ENCODE measurements at regions of chr11 and their contacts with region 1.

Region 1: DNA sequence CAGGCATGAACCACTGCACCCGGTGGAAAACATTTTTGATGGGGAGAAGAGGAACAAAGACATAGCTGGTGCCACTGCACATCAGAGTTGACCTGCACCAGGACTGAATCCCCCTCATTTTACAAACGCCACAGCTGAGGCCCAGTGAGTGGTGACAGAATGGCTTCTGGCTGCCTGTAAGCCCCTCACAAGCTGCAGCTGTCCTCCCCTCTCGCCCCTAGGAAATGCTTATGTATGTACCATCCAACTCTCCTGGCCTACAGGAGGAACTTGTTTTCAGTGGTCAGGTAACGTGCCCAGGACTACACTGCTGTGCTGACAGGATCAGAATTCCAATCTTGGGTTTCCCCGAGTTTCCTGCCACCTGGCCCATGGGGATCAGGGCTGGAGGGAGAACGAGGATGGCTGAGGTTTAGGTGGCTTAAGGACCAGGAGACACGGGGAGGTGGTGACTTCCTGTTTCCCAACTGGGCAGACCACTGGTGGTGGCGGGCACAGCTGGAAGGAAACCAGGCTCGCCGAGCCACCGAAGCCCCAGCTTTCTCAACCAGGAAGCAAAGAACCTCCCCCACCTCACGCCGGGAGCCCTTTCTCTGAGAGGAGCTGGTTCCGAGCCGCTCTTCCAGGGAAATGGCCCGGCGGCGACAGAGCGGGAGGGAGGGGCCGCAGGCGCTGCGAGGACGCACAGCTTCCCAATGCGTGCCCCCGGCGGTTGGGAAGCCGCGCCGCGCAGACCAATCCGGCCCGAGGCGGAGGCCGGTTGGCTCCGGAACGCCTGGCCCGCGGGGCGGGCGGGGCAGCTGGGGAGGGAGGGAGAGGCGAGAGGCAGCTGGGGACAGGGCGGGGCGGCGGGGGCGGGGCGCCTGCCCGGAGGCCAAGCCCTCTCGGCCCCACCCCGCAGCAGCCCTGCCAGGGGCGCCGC is 1.0 kb upstream of the LRFN4 start:
- DNase-seq: peak; percentile 90
- H3K4me3 ChIP-seq: peak overlapping the region; percentile 89
- H3K27ac ChIP-seq: peak overlapping the region; percentile 72
- H3K4me1 ChIP-seq: peaks cover 50% of the 10 kb centered on the region
- CTCF ChIP-seq: no peak

Region 2: DNA sequence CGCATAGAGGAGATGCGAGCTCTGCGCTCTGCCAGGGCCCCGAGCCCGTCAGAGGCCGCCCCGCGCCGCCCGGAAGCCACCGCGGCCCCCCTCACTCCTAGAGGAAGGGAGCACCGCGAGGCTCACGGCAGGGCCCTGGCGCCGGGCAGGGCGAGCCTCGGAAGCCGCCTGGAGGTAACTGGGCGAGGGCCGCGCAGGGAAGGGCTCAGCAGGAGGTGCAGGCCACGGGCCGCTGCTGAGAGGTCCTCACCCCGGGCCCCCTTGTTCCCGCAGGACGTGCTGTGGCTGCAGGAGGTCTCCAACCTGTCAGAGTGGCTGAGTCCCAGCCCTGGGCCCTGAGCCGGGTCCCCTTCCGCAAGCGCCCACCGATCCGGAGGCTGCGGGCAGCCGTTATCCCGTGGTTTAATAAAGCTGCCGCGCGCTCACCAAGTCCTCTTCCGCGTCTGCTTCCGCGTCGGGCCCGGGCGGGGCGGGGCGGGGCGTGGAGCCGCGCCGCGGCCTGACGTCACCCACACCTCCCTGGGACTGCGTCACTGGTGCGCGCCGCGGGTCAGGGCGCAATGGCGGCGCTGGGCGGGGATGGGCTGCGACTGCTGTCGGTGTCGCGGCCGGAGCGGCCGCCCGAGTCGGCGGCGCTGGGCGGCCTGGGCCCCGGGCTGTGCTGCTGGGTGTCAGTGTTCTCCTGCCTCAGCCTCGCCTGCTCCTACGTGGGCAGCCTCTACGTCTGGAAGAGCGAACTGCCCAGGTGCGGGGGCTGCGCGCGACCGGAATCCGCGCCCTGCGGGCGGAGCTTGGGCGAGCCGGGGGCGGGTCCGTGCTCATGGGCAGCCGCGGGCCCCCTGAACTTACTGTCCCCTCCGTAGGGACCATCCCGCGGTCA is 12.7 kb before region 1 on chr11 and contains the start of gene RCE1:
- CTCF ChIA-PET with region 1: no interaction called
- POLR2A ChIA-PET with region 1: interaction called, 6 read pairs
- intact Hi-C with region 1: loop called (anchors 1 kb)
- DNase-seq: peak; percentile 93
- H3K4me3 ChIP-seq: peak within 1 kb of the TSS; percentile 92
- H3K27ac ChIP-seq: peak within 1 kb of the TSS; percentile 81
- H3K4me1 ChIP-seq: peaks cover 39% of the 10 kb centered on the region
- CTCF ChIP-seq: no peak
- total RNA-seq, gene RCE1: 45.3 and 62.9 TPM in 2 replicates

Measured in OCI-LY7 (cell line).